ENCODE measurements at regions of chr4 and their contacts with region 1.

Region 1: GRCh38 chr4:674172-675035 is at the starts of genes ATP5ME and MYL5:
- DNase-seq: peak; percentile 97
- H3K4me3 Mint-ChIP-seq: peak within 1 kb of the TSS; percentile 84
- H3K27ac Mint-ChIP-seq: peak within 1 kb of the TSS; percentile 84
- H3K4me1 Mint-ChIP-seq: peaks cover 15% of the 10 kb centered on the region
- H3K27me3 Mint-ChIP-seq: no peaks in the 10 kb centered on the region
- total RNA-seq, gene ATP5ME: 254 to 257 TPM
- total RNA-seq, gene MYL5: 12.0 to 12.9 TPM

Region 2: GRCh38 chr4:242121-242848 is 432.1 kb before region 1 on chr4:
- CTCF ChIA-PET with region 1: no interaction called
- intact Hi-C with region 1: loop called (anchors 2 kb)
- DNase-seq: peak; percentile 79
- H3K4me3 Mint-ChIP-seq: peak overlapping the region; percentile 79
- H3K27ac Mint-ChIP-seq: peak overlapping the region; percentile 55
- H3K4me1 Mint-ChIP-seq: peaks cover 7% of the 10 kb centered on the region
- H3K27me3 Mint-ChIP-seq: no peaks in the 10 kb centered on the region

Region 3: DNA sequence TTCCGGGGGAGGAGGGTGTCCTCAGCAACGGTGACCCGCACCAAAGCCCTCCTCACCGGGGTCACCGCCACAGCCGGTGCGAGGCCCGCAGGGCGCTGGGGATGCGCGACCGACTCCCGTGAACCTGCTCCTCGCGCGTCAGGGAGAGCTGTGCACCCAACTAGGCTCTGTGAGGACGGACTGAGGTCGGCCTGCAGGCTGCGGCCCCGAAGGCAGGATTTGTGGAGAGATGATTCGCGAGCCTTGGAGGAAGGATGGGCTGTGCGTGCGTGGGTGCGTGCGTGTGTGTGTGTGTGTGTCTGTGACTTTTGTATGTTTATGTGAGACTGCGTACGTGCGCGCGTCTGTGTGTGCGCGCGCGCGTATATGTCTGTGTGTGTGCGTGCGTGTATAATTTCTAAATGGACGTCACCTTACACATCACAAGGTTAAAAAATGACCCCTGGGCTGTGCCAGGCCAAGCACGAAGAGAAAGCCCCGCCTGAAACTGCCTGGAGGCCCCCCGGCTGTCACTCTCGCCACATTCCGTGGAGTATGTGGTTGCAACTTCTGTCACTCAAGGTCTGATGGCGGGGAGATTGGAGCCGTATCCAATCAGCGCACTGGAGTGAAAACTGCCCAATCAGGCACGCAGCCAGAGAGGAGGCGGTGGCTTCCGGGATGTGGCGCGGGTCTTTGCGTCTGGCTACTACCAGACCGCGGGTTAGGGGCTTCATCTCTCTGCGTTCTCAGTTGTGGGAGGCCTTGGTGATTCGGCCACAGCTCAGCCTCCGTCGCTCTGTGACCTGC is 337.1 kb before region 1 on chr4 and contains the start of gene ZNF141:
- CTCF ChIA-PET with region 1: no interaction called
- intact Hi-C with region 1: loop called (anchors 10 kb)
- DNase-seq: peak; percentile 96
- H3K4me3 Mint-ChIP-seq: peak within 1 kb of the TSS; percentile 99
- H3K27ac Mint-ChIP-seq: peak within 1 kb of the TSS; percentile 99
- H3K4me1 Mint-ChIP-seq: peaks cover 22% of the 10 kb centered on the region
- H3K27me3 Mint-ChIP-seq: no peaks in the 10 kb centered on the region
- total RNA-seq, gene ZNF141: 21.2 to 23.2 TPM

Region 4: DNA sequence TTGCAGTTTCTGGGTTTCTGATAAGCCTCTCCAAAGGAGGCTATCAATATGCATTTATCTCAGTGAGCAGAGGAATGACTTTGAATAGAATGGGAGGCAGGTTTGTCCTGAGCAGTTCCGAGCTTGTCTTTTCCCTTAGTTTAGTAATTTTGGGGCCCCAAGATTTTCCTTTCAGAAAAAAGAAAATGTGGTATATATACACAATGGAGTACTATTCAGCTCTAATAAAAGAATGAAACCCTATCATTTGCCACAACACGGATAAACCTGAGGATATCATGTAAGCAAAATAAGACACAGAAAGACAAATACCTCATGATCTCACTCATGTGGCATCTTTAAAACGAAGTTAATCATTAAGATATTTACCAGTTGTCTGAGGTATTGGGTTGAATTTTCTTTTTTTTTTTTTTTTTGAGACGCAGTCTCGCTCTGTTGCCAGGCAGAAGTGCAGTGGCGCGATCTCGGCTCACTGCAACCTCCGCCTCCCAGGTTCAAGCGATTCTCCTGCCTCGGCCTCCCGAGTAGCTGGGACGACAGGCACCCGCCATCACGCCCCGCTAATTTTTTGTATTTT is 176.0 kb before region 1 on chr4:
- CTCF ChIA-PET with region 1: no interaction called
- intact Hi-C with region 1: loop called (anchors 5 kb)
- DNase-seq: no peak
- H3K4me3 Mint-ChIP-seq: peak overlapping the region; percentile 94
- H3K27ac Mint-ChIP-seq: peak overlapping the region; percentile 90
- H3K4me1 Mint-ChIP-seq: peaks cover 40% of the 10 kb centered on the region
- H3K27me3 Mint-ChIP-seq: no peaks in the 10 kb centered on the region

Region 5: GRCh38 chr4:602559-602942 is 71.9 kb before region 1 on chr4:
- CTCF ChIA-PET with region 1: interaction called, 3 read pairs
- intact Hi-C with region 1: loop called (anchors 1 kb)
- DNase-seq: peak; percentile 86
- H3K4me3 Mint-ChIP-seq: no peak overlapping the region
- H3K27ac Mint-ChIP-seq: no peak overlapping the region
- H3K4me1 Mint-ChIP-seq: peaks cover 2% of the 10 kb centered on the region
- H3K27me3 Mint-ChIP-seq: peaks cover 12% of the 10 kb centered on the region

Region 6: GRCh38 chr4:663438-664428 is 10.7 kb before region 1 on chr4:
- CTCF ChIA-PET with region 1: interaction called, 5 read pairs
- intact Hi-C with region 1: loop called (anchors 1 kb)
- DNase-seq: peak; percentile 74
- H3K4me3 Mint-ChIP-seq: peak overlapping the region; percentile 82
- H3K27ac Mint-ChIP-seq: peak overlapping the region; percentile 84
- H3K4me1 Mint-ChIP-seq: peaks cover 18% of the 10 kb centered on the region
- H3K27me3 Mint-ChIP-seq: no peaks in the 10 kb centered on the region

Region 7: DNA sequence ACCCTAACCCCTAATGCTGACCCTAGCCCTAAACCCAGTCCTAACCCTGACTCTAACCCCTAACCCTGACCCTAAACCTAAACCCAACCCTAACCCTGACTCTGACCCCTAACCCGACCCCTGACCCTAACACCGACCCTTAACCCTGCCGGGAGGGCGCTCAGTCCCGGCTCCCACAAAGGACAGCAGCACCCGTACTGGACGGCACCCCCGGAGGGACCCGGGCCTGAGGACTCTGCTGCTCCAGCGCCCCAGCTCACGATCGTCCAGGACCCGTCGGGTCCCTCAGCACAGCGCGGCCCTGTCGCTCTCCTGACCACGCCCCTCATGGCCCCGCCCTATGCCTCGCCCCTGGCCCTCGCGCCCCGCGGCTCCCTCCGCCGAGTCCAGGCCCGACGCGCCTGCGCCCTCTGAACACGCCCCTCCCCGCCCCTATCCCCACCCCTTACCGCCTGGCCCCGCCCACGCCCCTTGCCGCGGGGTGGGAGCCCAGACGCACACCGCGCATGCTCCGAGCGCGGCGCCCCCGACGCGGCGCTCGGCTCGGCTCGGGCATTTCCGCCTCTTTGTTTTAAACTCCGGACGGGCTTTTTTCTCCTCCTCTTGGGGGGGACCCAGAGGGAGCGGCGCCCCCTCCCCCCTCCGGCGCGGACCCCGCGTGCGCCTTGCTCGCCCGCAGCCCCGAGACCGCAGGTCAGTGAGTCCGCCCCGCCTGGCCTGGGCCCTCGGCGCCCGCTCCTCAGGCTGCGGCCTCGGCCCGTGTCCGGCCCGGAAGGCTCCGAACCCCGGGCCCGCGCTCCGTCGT is 31.1 kb after region 1 on chr4 and contains the start of gene PCGF3:
- CTCF ChIA-PET with region 1: no interaction called
- intact Hi-C with region 1: loop called (anchors 1 kb)
- DNase-seq: peak; percentile 96
- H3K4me3 Mint-ChIP-seq: peak within 1 kb of the TSS; percentile 76
- H3K27ac Mint-ChIP-seq: no peak within 1 kb of the TSS
- H3K4me1 Mint-ChIP-seq: peaks cover 13% of the 10 kb centered on the region
- H3K27me3 Mint-ChIP-seq: no peaks in the 10 kb centered on the region
- total RNA-seq, gene PCGF3: 24.7 to 25.9 TPM

Region 8: GRCh38 chr4:1417522-1418390 is 743.4 kb after region 1 on chr4:
- CTCF ChIA-PET with region 1: no interaction called
- intact Hi-C with region 1: no loop called
- DNase-seq: no peak
- H3K4me3 Mint-ChIP-seq: no peak overlapping the region
- H3K27ac Mint-ChIP-seq: no peak overlapping the region
- H3K4me1 Mint-ChIP-seq: peaks cover 5% of the 10 kb centered on the region
- H3K27me3 Mint-ChIP-seq: peaks cover 30% of the 10 kb centered on the region